ENCODE measurements at regions of chr22 and their contacts with region 1.

Region 1: GRCh38 chr22:37267135-37267587 is 15.1 kb upstream of the CYTH4 start:
- DNase-seq: peak; percentile 77
- H3K4me3 Mint-ChIP-seq: peak overlapping the region; percentile 78
- H3K27ac Mint-ChIP-seq: peak overlapping the region; percentile 74
- H3K4me1 Mint-ChIP-seq: peaks cover 27% of the 10 kb centered on the region
- H3K27me3 Mint-ChIP-seq: no peaks in the 10 kb centered on the region

Region 2: GRCh38 chr22:36986242-36986821 is 280.8 kb before region 1 on chr22:
- CTCF ChIA-PET with region 1: no interaction called
- intact Hi-C with region 1: no loop called
- DNase-seq: peak; percentile 79
- H3K4me3 Mint-ChIP-seq: no peak overlapping the region
- H3K27ac Mint-ChIP-seq: no peak overlapping the region
- H3K4me1 Mint-ChIP-seq: no peaks in the 10 kb centered on the region
- H3K27me3 Mint-ChIP-seq: peaks cover 18% of the 10 kb centered on the region

Region 3: DNA sequence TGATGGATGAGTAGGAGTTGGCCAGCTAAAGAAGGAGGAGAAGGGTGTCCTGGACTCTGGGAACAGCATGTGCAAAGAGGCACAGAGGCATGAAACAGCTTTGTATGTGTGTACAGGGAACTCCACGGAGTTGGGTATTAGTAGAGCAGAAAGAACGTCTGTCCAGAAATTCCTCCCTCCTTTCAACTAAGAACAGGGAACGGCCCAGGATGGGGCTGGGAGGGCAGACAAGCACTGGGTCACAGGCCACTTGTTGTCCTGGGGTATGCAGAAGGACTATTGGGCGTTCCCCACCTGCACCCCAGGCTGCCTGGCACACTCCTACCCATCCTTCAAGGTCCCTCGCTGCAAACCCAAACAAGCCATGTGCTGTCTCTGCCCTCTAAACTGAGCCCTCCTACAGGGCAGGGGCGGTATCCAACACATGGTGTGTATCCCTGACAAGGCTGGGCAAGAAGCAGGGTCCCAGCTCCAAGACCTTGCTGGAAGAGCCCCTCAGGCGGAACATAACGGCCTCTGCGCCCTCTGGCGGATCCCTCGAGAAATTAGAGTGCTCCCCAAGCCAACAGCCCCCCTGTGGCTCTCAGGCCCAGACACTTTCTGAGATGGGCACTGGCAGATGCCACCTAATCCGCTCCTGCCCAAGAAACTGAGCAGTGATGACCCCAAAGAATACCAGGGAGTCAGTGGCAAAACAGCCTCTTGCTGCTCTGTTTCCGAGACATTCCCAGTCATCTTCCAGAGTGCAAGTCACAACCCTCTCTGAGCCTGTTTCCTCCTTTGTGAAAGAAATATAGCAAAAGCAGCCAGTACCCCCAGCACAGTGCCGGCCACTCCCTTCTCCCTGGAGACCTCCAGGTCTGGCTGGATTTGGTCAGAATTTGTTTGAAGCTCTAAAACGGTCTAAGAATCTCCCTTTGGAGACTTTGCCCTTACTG is 161.8 kb after region 1 on chr22:
- CTCF ChIA-PET with region 1: interaction called, 19 read pairs
- intact Hi-C with region 1: loop called (anchors 1 kb)
- DNase-seq: peak; percentile 69
- H3K4me3 Mint-ChIP-seq: no peak overlapping the region
- H3K27ac Mint-ChIP-seq: no peak overlapping the region
- H3K4me1 Mint-ChIP-seq: peaks cover 16% of the 10 kb centered on the region
- H3K27me3 Mint-ChIP-seq: peaks cover 42% of the 10 kb centered on the region

Region 4: DNA sequence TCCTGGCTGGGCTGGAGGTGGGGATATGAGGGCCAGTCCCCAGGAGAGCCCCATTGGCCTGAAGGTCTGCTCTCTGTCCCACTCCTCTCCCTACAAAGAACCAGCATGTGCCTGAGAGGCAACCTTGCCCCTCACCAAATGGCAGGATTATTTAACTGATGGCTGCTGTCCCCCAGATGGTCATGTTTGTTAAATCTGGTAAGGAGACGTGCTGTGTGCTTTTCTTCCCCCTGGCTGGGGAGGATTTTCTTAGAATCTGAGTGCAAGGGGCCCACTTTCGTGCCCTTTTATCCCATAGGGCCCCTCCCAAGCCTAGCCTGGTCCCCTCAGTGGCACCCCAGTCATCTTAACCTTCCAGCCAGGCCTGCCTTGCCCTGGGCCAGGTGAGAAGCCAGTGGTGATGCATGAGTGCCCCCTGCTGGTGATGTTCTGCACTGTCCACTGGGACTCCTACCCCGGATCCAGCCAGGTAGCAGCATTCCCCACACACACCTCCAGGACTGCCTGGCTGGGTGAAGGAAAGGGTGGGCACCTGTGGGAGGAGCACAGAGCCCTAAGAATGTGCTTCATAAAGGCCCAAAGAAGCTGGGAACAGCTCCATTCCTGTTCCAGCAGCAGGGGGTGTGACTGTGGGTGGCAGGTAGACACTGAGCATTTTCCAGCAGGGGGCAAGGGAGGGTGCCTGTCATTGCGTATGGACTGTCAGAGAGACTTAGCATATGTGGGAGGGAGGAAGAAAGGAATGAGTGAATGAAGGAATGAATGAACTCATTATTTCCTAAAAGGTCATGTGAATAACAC is 190.1 kb after region 1 on chr22:
- CTCF ChIA-PET with region 1: interaction called, 12 read pairs
- intact Hi-C with region 1: loop called (anchors 1 kb)
- DNase-seq: peak; percentile 93
- H3K4me3 Mint-ChIP-seq: no peak overlapping the region
- H3K27ac Mint-ChIP-seq: no peak overlapping the region
- H3K4me1 Mint-ChIP-seq: no peaks in the 10 kb centered on the region
- H3K27me3 Mint-ChIP-seq: no peaks in the 10 kb centered on the region